GM13976 (cell line): ENCODE measurements at regions of chrX and their contacts with region 1.

Region 1: DNA sequence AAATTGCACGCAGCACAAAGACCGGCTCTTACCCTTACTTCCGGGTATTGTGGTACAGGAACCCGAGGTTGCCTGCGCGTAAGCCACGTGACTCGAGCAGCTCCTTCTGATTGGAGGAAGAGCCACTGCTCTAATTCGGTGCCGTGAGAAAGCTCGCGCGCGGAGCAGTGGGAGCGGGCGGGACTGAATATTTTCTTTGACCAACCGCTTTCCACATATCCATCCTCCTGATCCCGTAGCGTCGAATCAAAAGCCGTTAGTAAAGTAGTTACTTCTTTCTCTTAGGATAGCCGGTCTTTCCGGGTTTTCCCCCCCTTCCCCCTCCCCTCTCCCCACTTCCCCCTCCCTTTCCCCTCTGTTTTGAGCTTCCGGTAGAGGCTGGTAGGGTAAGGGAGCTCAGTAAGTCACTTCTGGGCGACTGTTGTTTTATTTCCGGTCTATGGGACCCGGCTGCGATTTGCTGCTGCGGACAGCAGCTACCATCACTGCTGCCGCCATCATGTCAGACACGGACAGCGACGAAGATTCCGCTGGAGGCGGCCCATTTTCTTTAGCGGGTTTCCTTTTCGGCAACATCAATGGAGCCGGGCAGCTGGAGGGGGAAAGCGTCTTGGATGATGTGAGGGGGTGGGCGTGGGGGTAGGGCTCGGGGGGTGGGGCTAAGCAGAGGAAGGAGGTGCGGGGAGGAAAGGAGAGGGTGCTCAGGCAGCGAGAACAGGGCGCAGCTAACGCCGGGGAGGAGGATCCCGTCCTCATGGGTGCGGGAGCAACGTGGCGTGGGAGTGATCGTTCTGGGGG is at the start of gene TAF1:
- DNase-seq: peak; percentile 86
- CTCF ChIP-seq: no peak

Region 2: DNA sequence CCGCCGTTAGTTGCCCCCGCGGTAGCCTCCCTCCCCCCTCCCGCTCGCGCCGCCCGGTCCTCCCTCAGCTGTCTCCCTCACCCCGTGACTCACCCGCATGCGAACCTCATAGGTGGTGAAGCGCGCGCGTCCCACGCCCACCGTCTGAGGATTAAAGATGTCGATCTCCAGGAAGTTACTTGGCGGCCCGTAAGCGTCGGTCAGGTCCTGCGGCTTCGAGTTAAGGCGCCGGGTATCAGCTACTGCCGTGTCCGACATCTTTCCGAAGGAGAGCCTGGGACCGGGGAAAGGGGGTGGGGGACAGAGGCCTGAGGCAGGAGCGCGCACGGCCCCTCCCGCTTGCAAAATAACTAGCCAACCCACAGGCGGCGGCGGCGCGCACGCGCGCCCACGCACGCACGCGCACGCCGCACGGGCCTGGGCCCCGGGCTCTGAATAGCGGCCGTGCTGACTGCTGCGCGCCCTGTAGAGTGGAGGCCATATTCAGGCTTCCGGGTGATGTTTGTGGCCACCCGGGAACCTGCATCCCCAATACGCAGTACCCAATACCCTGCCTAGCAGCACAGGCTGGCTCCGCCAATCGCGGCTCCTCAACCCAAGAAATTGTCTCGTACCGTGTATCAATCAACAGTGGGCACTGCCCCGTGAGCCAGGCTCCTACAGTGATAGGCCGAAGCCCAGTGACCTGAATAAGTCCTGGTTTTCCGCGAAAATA is 297.9 kb before region 1 on chrX and contains the start of gene SNX12:
- in situ Hi-C with region 1: no loop called
- DNase-seq: peak; percentile 86
- CTCF ChIP-seq: peak; percentile 77

Region 3: DNA sequence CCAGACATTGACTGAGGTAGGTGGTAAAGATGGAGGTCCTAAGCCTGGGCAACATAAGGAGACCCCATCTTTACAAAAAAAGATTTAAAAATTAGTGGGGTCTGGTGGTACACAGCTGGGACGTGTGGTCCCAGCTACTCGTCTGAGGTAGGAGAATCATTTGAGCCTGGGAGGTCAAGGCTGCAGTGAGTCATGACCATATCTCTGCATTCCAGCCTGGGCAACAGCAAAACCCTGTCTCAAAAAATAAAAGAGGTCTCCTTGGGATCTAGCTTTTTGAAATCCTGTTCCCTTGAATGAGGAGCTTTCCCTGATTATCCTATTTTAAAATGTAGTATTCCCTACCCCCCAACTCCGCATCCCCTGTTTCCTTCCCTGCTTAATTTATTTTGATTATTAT is 88.1 kb after region 1 on chrX:
- in situ Hi-C with region 1: loop called (anchors 25 kb)
- DNase-seq: no peak
- CTCF ChIP-seq: no peak

Region 4: GRCh38 chrX:71885099-71885498 is 519.0 kb after region 1 on chrX:
- in situ Hi-C with region 1: no loop called
- DNase-seq: no peak
- CTCF ChIP-seq: no peak

Region 5: GRCh38 chrX:71989768-71990426 is 623.8 kb after region 1 on chrX:
- in situ Hi-C with region 1: no loop called
- DNase-seq: no peak
- CTCF ChIP-seq: no peak